Activated T-helper 1 cell treated with anti-CD3 and anti-CD28 coated beads, Interleukin-12 subunit alpha, Interleukin-12 subunit beta, Interleukin-2, Interleukin-4 antibody, amounts not matched to agents 30 ng/mL and 10 ng/mL and 1 ng/mL, durations not matched to agents 14 hours and 24 hours and 36 hours (primary cell): ENCODE measurements at regions of chr4 and their contacts with region 1.

Region 1: GRCh38 chr4:99117876-99118693 is 26.0 kb downstream of the ADH4 start:
- DNase-seq: no peak
- H3K4me3 Mint-ChIP-seq: no peak overlapping the region
- H3K27ac Mint-ChIP-seq: no peak overlapping the region
- H3K4me1 Mint-ChIP-seq: no peaks in the 10 kb centered on the region
- H3K27me3 Mint-ChIP-seq: peaks cover 3% of the 10 kb centered on the region

Region 2: DNA sequence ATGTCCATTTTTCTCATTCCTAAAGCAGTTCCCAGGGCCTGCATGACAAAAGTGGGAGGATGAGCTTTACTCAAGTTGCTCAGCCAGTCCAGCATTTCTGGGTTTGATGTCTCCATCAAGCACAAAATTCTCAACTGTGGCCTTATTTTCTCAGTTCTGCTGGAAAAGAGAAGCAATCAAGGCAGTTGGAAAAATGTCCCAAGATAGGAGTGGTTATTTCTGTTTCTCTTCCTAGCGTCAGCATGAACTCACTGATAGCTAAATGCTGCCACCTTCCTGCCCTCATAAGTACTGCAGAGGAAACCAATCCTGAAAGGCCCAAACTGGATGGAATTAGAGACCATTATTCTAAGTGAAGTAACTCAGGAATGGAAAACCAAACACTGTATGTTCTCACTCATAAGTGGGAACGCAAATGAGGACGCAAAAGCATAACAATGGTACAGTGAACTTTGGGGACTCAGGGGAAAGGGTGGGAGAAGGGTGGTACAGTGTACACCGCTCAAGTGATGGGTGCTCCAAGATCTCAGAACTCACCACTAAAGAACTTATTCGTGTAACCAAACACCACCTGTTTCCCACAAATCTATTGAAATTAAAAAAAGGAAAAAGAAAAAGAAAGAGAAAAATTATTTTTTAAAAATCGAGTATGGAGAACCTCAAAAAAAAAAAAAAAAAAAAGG is 287.5 kb after region 1 on chr4:
- intact Hi-C with region 1: loop called (anchors 1 kb)
- DNase-seq: peak; percentile 25
- H3K4me3 Mint-ChIP-seq: no peak overlapping the region
- H3K27ac Mint-ChIP-seq: no peak overlapping the region
- H3K4me1 Mint-ChIP-seq: peaks cover 19% of the 10 kb centered on the region
- H3K27me3 Mint-ChIP-seq: peaks cover 11% of the 10 kb centered on the region

Region 3: DNA sequence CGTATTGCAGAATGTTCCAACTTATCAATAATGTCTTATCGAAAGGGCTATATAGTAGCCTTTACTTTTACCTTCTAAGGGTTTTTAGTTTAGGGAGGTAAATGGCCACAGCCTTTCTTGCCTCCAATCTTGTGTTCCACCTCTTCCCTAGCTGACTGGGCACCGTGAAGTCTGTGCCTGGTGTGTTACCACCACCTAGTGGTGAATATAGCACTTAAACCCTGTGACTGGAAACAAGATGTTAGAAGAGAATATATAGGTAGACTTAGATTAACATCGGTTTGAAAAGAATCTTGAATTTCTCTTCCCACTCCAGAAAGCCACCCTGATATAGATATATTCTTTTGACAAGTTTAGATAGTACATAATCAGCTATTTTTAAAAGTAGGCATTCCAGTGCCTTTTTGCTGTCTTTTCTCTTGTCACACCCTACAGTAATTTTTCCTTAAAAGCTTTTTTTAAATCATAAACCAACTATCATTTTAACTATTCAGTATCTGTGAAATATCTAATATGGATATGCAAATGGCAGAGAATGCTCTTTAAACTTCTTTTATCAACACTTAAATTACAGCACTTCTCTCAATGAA is 344.9 kb after region 1 on chr4:
- intact Hi-C with region 1: loop called (anchors 1 kb)
- DNase-seq: peak; percentile 37
- H3K4me3 Mint-ChIP-seq: no peak overlapping the region
- H3K27ac Mint-ChIP-seq: no peak overlapping the region
- H3K4me1 Mint-ChIP-seq: no peaks in the 10 kb centered on the region
- H3K27me3 Mint-ChIP-seq: peaks cover 11% of the 10 kb centered on the region

Region 4: GRCh38 chr4:99529228-99529627 is 411.1 kb after region 1 on chr4:
- intact Hi-C with region 1: no loop called
- DNase-seq: no peak
- H3K4me3 Mint-ChIP-seq: no peak overlapping the region
- H3K27ac Mint-ChIP-seq: no peak overlapping the region
- H3K4me1 Mint-ChIP-seq: no peaks in the 10 kb centered on the region
- H3K27me3 Mint-ChIP-seq: peaks cover 17% of the 10 kb centered on the region

Region 5: GRCh38 chr4:99808260-99808857 is 690.3 kb after region 1 on chr4:
- intact Hi-C with region 1: loop called (anchors 1 kb)
- DNase-seq: peak; percentile 63
- H3K4me3 Mint-ChIP-seq: no peak overlapping the region
- H3K27ac Mint-ChIP-seq: no peak overlapping the region
- H3K4me1 Mint-ChIP-seq: peaks cover 16% of the 10 kb centered on the region
- H3K27me3 Mint-ChIP-seq: peaks cover 11% of the 10 kb centered on the region